A549 (cell line): ENCODE measurements at regions of chr14 and their contacts with region 1.

Region 1: DNA sequence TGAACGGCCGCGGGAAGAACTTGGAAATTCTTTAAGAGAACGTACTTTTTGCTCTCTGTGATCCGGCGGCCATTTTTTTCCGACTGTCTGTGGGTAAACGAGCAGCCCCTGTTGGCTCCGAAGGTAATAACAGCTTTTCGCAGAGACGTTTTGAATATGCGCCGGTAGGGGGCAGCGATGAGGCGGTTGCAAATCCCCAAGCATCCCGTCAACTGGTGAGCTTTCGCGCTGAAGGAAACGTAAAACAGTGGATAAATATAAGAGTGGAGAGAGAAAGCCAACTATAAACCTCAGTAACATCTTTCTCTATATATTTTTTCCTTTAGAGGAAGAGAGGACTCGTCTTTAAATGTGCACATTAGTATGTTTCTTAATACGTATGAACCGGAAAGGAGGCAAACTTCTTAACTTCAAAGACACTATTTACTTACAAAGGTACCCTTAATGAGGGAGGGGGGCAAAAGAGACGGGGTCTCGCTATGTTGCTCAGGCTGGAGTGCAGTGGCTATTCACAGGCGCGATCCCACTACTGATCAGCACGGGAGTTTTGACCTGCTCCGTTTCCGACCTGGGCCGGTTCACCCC is 9.6 kb upstream of the NEMF start:
- DNase-seq: peak; percentile 56 to 93
- ATAC-seq: peak; percentile 50 to 71
- H3K4me3 ChIP-seq: peak overlapping the region; percentile 59
- H3K27ac ChIP-seq: peak overlapping the region; percentile 88 to 96
- H3K4me1 ChIP-seq: peaks cover 20% of the 10 kb centered on the region
- CTCF ChIP-seq: peak; percentile 100
- EP300 ChIP-seq: no peak
- POLR2A ChIP-seq: no peak
- RAD21 ChIP-seq: peak; percentile 51 to 53

Region 2: DNA sequence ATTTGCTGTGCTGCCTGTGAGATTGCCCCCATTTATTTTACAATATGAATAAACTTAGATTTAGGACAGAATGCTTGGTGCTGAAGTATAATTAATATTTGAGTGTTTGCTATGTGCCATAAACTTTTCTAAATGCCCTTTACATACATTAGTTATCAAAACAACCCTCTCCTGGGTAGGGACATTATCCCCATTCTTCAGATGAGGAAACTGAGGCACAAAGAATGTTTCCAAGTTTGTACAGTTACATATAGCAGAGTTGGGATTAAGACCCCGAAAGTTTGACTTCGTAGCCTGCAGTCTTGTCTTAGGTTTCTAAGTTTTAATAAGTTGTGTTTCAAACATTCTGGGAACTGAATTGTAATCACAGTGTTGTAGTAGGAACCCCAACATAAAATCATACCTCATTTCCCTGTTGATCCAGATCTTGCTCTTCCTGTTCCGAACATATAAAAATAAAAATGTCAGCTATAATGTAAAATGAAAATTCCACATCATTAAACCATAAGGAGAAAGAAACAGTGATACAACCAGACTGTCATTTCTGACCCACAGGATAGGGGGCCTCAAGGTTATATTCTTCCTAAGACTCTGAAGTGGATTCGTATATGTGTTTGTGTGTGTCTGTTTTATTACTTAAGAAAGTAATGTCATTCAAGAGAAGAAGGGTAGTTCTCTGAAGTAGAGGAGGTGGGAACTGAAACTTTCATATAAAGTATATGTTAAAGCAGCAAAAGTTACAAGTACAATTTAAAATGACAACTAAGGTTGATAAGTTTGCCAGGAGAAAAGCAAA is 75.7 kb before region 1 on chr14:
- CTCF ChIA-PET with region 1: no interaction called
- POLR2A ChIA-PET with region 1: no interaction called
- DNase-seq: no peak
- ATAC-seq: peak; percentile 39 to 42; a peak in 1 of 6 replicates
- H3K4me3 ChIP-seq: no peak overlapping the region
- H3K27ac ChIP-seq: no peak overlapping the region
- H3K4me1 ChIP-seq: no peaks in the 10 kb centered on the region
- CTCF ChIP-seq: no peak
- EP300 ChIP-seq: no peak
- POLR2A ChIP-seq: no peak
- RAD21 ChIP-seq: no peak

Region 3: GRCh38 chr14:49879683-49880204 is 17.6 kb after region 1 on chr14:
- CTCF ChIA-PET with region 1: interaction called, 28 read pairs
- POLR2A ChIA-PET with region 1: interaction called, 3 read pairs
- DNase-seq: peak; percentile 59 to 89
- ATAC-seq: peak; percentile 89 to 95
- H3K4me3 ChIP-seq: no peak overlapping the region
- H3K27ac ChIP-seq: peak overlapping the region; percentile 3 to 38; a peak in 2 of 6 replicates
- H3K4me1 ChIP-seq: 0 out of 3 replicates have a peak, but pooled peaks cover 3% of the 10 kb centered on the region
- CTCF ChIP-seq: peak; percentile 53; the same call in 2 of the 3 replicates
- EP300 ChIP-seq: no peak
- POLR2A ChIP-seq: no peak
- RAD21 ChIP-seq: peak; percentile 53 to 72

Region 4: DNA sequence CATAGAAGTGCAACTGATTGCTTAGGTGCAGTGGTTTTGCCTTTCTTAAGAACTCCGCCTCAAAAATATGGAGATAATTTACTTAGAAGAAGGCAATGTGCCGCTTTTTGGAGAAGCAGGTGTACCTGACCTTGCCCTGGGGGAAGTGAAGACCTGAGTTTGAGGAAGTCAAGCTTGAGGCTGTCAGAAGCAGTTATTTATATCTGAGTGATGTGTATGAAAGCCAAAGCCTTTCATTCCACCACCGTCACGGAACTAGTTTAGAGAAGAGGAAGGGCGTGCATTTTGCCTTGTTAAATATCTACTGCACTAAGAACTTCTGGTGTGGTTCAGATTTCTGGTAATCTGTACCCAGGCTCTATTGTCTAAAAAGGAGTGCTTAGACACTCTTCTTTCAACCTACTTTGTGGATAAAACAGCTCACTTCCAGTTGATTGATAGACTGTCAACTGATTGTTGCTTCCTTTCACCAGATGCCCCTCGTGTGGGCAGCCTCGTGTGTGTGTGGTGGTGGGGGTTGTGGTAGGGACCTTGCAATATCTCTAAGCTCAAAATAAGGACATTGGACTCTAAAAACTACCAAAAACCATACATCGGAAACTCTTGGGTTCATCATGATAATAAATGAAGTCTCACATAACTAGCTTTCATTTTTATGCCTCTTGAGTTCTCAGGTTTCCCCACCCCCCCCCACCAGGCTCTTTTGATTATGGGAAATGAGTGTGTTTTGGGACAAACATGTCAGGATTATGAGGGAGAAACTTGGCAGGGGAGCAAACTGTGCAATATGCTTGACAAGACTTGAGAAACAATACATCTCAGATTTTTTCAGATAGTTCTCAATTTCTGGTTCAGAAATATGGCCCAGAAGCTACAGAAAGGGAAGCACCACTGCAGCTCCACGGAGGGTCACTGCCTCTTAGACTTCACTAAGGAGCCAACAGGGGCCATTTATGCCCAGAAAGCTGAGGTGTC is 109.3 kb after region 1 on chr14:
- CTCF ChIA-PET with region 1: interaction called, 43 read pairs
- POLR2A ChIA-PET with region 1: interaction called, 3 read pairs
- DNase-seq: no peak
- ATAC-seq: peak in 1 of 2 experiments; percentile 42; a peak in 3 of 6 replicates
- H3K4me3 ChIP-seq: no peak overlapping the region
- H3K27ac ChIP-seq: peak overlapping the region; percentile 87 to 88
- H3K4me1 ChIP-seq: peaks cover 76% of the 10 kb centered on the region
- CTCF ChIP-seq: no peak
- EP300 ChIP-seq: no peak
- POLR2A ChIP-seq: no peak
- RAD21 ChIP-seq: no peak

Region 5: GRCh38 chr14:50003213-50004031 is 141.2 kb after region 1 on chr14:
- CTCF ChIA-PET with region 1: interaction called, 16 read pairs
- POLR2A ChIA-PET with region 1: interaction called, 6 read pairs
- DNase-seq: peak; percentile 75 to 80
- ATAC-seq: peak; percentile 49 to 66
- H3K4me3 ChIP-seq: peak overlapping the region; percentile 48
- H3K27ac ChIP-seq: peak overlapping the region; percentile 90 to 94
- H3K4me1 ChIP-seq: peaks cover 64% of the 10 kb centered on the region
- CTCF ChIP-seq: no peak; the same call in 1 of the 3 replicates
- EP300 ChIP-seq: no peak
- POLR2A ChIP-seq: peak; percentile 66
- RAD21 ChIP-seq: peak; percentile 23 to 67

Region 6: DNA sequence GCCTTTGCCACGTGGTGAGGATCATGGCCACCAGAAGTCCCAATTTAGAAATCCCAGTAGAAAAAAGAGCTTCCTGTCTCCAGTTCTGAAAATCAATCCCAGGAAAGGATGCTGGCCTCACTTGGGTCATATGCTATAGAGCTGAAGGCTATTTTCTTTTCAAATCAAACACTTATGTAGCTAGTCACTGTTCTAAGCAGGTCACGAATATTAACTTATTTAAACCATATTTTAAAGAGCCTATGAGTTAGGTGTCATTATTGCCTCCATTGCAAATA is 156.7 kb after region 1 on chr14:
- CTCF ChIA-PET with region 1: interaction called, 7 read pairs
- POLR2A ChIA-PET with region 1: interaction called, 10 read pairs
- DNase-seq: no peak
- ATAC-seq: no peak
- H3K4me3 ChIP-seq: no peak overlapping the region
- H3K27ac ChIP-seq: peak overlapping the region in 1 of 2 experiments; percentile 67; a peak in 4 of 6 replicates
- H3K4me1 ChIP-seq: peaks cover 29% of the 10 kb centered on the region
- CTCF ChIP-seq: no peak
- EP300 ChIP-seq: no peak
- POLR2A ChIP-seq: no peak
- RAD21 ChIP-seq: no peak

Region 7: DNA sequence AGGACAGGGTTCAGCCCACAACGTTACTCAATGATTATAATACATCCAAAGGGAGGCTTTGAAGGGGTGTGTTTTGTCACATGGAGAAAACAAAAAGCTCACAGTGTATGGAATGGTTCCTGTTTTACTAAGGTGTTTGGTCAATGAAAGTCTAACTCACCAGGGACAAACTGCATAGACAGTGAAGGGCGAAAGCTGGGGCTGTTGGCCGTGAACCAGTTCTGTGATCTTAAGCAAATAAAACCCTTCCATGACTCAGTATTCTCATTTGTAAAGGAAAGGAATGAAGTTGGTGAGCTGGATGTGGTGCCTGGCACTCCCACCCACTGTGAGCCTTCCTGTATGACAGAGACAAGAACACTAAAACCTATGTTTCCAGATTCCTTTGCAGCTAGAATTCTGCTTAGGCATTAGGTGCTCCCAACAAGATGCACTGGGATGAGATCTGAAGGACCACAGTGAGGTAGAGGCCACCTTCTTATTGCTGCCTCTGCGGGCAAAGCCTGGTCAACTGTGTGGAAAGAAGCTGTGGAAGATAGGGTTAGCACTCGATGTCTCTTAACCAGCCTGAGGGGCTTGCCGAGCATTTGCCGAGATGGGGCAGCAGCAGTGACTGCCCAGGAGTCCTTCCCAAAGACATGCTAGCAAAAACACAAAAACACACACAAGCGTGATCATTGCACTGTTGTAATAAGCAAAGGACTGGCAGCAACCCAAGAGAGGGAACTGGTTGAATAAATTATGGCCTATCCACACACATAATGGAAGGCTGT is 205.7 kb after region 1 on chr14:
- CTCF ChIA-PET with region 1: interaction called, 29 read pairs
- POLR2A ChIA-PET with region 1: interaction called, 12 read pairs
- DNase-seq: peak; percentile 40 to 79
- ATAC-seq: peak; percentile 82 to 87
- H3K4me3 ChIP-seq: no peak overlapping the region
- H3K27ac ChIP-seq: peak overlapping the region; percentile 46 to 63; a peak in 5 of 6 replicates
- H3K4me1 ChIP-seq: peaks cover 16% of the 10 kb centered on the region
- CTCF ChIP-seq: no peak
- EP300 ChIP-seq: no peak
- POLR2A ChIP-seq: no peak
- RAD21 ChIP-seq: 0 out of 5 replicates have a peak, but pooled peaks of 1 of the 2 experiments have one; percentile 10

Region 8: DNA sequence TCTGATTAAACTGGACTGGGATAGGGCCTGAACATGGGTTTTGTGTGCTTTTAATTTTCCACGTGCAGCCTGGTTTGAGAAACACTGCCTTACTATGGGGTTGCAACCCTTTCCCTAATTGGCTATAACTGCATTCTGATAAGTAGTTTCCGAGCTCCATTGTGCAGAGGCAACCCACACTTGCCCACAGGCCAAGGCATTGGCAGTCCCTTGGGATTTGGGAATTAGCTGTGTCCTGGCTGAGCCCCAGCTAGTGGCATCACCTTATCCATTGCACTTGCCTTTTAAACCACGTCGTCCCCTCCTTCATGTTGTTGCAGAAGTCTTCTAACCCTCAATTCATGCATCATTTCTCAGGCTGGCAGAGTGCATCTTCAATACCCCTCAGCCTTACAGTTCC is 244.0 kb after region 1 on chr14:
- CTCF ChIA-PET with region 1: interaction called, 259 read pairs
- POLR2A ChIA-PET with region 1: interaction called, 18 read pairs
- DNase-seq: no peak
- ATAC-seq: peak in 1 of 2 experiments; percentile 39; a peak in 3 of 6 replicates
- H3K4me3 ChIP-seq: no peak overlapping the region
- H3K27ac ChIP-seq: no peak overlapping the region
- H3K4me1 ChIP-seq: peaks cover 15% of the 10 kb centered on the region; the same call in 2 of the 3 replicates
- CTCF ChIP-seq: no peak
- EP300 ChIP-seq: no peak
- POLR2A ChIP-seq: no peak
- RAD21 ChIP-seq: no peak

Region 9: DNA sequence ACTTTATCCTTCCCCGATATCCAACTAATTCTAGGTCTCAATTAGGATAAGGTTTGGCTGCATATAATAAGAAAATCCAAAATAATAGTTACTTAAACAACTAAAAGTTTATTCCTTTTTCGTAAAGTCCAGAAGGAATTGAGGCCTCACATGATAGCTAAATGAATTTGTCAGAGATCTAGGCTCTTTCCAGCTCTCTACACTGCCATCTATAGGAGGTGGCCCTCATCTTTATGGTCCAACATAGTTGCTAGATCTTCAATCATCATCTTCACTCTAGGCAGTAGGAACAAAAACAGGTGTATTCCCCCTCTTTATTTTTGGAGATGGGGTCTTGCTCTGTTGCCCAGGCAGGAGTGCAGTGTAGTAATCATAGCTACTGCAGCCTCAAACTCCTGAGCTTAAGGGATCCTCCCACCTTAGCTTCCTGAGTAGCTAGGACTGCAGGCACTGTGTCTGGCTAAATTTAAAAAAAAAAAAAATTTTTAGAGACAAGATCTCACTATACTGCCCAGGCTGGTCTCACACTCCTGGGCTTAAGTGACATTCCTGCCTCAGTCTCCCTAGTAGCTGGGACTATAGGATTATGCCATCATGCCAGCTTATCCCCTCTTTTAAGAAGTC is 852.4 kb after region 1 on chr14:
- CTCF ChIA-PET with region 1: no interaction called
- POLR2A ChIA-PET with region 1: no interaction called
- DNase-seq: peak in 1 of 2 experiments; percentile 13
- ATAC-seq: peak in 1 of 2 experiments; percentile 70; a peak in 3 of 6 replicates
- H3K4me3 ChIP-seq: no peak overlapping the region
- H3K27ac ChIP-seq: no peak overlapping the region
- H3K4me1 ChIP-seq: no peaks in the 10 kb centered on the region
- CTCF ChIP-seq: peak; percentile 26; the same call in 2 of the 3 replicates
- EP300 ChIP-seq: no peak
- POLR2A ChIP-seq: no peak
- RAD21 ChIP-seq: peak; percentile 17 to 33; a peak in 1 of 5 replicates